Heart right ventricle (tissue), 16 donors: ENCODE measurements at regions of chr18 and their contacts with region 1.

Region 1: DNA sequence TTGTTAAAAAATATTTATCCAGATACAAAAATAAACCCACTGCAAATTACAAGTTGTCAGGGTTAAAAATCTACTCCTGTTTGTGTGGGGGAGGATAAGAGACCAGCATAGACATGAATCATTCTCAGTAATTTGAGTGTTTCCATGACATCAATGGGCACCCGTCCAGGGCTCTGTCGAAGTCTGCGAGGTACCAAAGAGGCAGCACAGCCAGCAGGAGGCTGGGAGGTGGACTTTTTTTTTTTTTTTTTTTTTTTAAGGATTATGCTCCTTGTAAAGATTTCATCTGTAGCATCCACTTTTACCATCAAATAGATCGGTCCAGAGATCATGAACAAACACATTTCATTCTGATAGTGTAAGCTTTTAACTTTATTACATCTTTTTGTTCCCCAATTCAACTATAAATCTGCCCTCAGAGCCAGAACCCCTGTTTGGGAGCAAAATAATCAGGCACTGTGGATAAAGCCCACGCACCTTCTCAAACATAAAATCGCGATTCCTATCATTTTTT is 182.0 kb downstream of the TCF4 start:
- DNase-seq: peak; percentile 82 to 95
- ATAC-seq: peak; percentile 80 to 92 (median 88)
- H3K4me3 ChIP-seq: no peak overlapping the region
- H3K27ac ChIP-seq: peak overlapping the region; percentile 24 to 86 (median 82)
- H3K4me1 ChIP-seq: peaks cover 0 to 58% (median 38%) of the 10 kb centered on the region in 9 donors
- H3K27me3 ChIP-seq: no peaks in the 10 kb centered on the region
- CTCF ChIP-seq: peak in 5 of 9 donors; percentile 10 to 39 (median 24)

Region 2: DNA sequence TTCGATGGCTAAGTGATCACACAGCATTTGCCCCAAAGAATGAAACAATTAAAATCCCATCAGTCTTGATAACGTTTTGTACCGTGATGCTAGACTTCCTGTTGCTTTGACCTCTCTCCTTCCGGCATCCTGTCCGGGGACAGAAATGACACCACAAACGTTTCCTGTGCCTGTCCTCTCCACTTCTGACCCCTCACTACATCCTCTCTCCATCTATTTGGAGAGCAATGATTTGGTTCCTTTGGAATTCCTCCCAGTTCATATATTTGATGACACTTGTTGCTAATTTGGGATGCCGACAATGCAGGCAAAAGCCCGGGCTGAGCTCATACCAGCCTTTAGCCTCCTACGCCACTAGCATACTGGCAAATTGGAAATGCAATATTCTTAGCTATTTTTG is 295.5 kb before region 1 on chr18:
- intact Hi-C with region 1: loop called in 1 of 10 experiments (anchors 10 kb)
- DNase-seq: peak; percentile 13 to 58
- ATAC-seq: peak; percentile 86 to 95 (median 93)
- H3K4me3 ChIP-seq: no peak overlapping the region
- H3K27ac ChIP-seq: peak overlapping the region; percentile 32 to 83 (median 71)
- H3K4me1 ChIP-seq: peaks cover 0 to 41% (median 11%) of the 10 kb centered on the region in 9 donors
- H3K27me3 ChIP-seq: no peaks in the 10 kb centered on the region
- CTCF ChIP-seq: no peak

Region 3: GRCh38 chr18:55243857-55244256 is 162.1 kb before region 1 on chr18:
- intact Hi-C with region 1: loop called in 9 of 10 experiments (anchors 5 to 10 kb)
- DNase-seq: peak in 1 of 2 donors; percentile 89
- ATAC-seq: peak; percentile 75 to 91 (median 84)
- H3K4me3 ChIP-seq: peak overlapping the region in 1 of 10 donors; percentile 9
- H3K27ac ChIP-seq: peak overlapping the region; percentile 55 to 89 (median 76)
- H3K4me1 ChIP-seq: peaks cover 21 to 100% (median 80%) of the 10 kb centered on the region in 9 donors
- H3K27me3 ChIP-seq: no peaks in the 10 kb centered on the region
- CTCF ChIP-seq: no peak

Region 4: DNA sequence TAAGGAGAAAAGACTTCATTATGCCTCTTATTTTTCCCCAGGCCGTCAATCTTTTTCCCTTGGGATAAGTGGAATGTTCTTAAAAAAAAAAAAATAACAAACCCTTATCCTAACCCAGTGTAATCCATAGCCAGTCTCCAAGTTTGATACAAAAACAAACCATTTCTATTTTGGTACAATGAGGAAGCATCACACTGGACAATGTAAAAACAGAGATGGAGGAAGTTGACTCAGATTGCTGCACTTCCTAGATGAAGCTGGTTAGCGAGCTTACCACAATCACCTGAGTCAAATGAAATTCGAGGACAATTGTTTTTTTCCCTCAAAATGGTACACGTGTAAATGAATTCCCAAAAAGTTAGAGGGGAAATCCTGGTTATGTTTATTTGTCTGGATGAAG is 77.6 kb before region 1 on chr18:
- intact Hi-C with region 1: loop called in 5 of 10 experiments (anchors 5 kb)
- DNase-seq: peak in 1 of 2 donors; percentile 29
- ATAC-seq: peak; percentile 80 to 96 (median 91)
- H3K4me3 ChIP-seq: peak overlapping the region in 1 of 10 donors; percentile 5
- H3K27ac ChIP-seq: peak overlapping the region; percentile 31 to 98 (median 62)
- H3K4me1 ChIP-seq: peaks cover 5 to 94% (median 62%) of the 10 kb centered on the region in 9 donors
- H3K27me3 ChIP-seq: no peaks in the 10 kb centered on the region
- CTCF ChIP-seq: no peak

Region 5: GRCh38 chr18:55343396-55344073 is 62.4 kb before region 1 on chr18:
- intact Hi-C with region 1: loop called in 4 of 10 experiments (anchors 5 to 10 kb)
- DNase-seq: no peak
- ATAC-seq: peak in 5 of 8 donors; percentile 46 to 67 (median 57)
- H3K4me3 ChIP-seq: no peak overlapping the region
- H3K27ac ChIP-seq: peak overlapping the region in 1 of 10 donors; percentile 1
- H3K4me1 ChIP-seq: peaks cover 2 to 66% (median 24%) of the 10 kb centered on the region in 9 donors
- H3K27me3 ChIP-seq: no peaks in the 10 kb centered on the region
- CTCF ChIP-seq: peak; percentile 24 to 73 (median 61)

Region 6: DNA sequence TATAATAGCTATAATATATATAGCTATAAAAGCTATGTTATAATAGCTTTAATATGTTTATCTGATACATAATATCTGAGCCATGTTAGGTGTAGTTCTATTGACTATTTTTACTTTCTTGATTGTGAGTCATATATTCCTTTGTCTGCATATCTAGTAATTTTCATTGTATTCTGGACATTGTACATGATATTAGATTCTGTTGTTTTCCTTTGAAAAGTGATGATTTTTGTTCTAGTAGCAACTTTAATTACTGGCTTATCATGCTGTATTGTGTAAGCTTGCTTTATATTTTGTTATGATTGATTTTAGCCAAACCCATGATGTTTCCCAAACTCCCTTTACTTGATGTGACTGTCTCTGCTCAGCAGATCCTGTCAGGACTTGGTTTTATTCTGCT is 307.8 kb after region 1 on chr18:
- intact Hi-C with region 1: no loop called
- DNase-seq: no peak
- ATAC-seq: no peak
- H3K4me3 ChIP-seq: no peak overlapping the region
- H3K27ac ChIP-seq: no peak overlapping the region
- H3K4me1 ChIP-seq: no peaks in the 10 kb centered on the region
- H3K27me3 ChIP-seq: no peaks in the 10 kb centered on the region
- CTCF ChIP-seq: no peak